Posterior cingulate gyrus (tissue), 11 donors: ENCODE measurements at regions of chr6 and their contacts with region 1.

Region 1: DNA sequence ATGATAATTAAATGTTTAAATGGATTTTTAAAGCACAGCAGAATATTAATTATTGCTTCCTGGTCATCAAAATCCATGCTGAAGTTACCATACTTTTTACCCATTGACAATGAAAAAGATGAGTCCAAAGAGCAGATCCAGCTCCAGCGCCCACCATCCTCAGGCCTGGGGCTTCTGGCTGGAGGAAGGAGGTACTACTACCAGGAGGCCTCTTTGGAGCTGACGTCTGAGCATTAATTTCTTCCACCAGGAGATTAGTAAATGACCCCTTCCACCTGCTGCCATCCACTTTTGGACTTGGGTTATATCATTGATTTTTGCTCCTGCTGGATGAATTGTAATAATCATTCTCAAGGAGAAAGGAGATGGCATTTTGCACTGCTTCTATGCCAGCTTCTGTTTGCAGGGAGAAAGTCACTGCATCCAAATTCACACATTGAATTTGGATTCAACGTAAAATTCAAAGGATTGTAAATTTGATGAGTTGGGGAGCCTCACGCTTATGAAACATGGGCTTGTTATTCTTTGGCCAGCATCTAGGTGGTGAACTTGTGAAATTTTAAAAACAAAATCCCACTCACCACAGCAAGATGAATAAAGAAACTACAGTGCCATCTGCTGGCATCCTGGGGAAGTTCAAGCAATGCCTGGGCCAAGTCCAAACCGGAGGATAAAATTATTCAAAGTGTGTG is 121.8 kb downstream of the SASH1 start:
- DNase-seq: peak in 8 of 10 donors; percentile 43 to 88 (median 77)

Region 2: GRCh38 chr6:148177589-148178233 is 286.8 kb before region 1 on chr6:
- intact Hi-C with region 1: loop called (anchors 1 kb)
- DNase-seq: peak in 9 of 10 donors; percentile 21 to 93 (median 72)

Region 3: DNA sequence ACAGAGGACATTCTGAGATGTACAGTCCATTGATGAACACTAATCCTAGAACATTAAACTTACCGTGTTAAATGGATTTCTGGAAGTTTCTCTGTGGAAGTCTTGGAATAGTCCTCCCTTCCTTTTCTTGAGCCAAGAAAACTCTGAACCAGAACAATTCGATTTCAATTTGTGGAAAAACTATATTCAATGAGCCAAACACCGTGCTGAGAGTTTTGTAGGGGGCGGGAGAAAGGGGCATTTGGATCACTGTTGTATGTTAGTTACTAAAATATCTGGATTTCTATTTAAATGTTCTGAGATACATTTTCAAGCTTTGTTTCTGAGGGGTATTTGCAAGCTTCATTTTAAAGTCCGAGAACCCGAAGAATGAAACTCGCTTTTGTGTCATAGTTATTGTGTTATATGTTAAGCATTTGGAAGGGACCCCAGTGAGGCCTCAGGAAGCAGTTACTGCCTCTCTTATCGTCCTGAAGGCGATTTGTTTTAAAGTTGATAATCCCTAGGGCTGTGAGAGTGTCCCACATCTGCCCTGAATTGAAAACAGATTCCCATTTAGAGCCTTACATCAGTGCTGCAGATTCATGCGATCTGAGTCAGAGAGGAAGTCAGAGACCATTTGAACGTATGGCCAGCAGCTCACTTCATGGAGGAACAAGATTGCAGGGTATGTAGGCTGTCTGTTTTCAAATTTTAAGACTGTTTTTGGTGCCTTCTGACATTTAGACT is 192.6 kb before region 1 on chr6:
- intact Hi-C with region 1: loop called (anchors 5 kb)
- DNase-seq: no peak

Region 4: GRCh38 chr6:148342357-148343046 is 122.0 kb before region 1 on chr6 and contains the start of gene SASH1:
- intact Hi-C with region 1: loop called (anchors 2 kb)
- DNase-seq: peak; percentile 45 to 94 (median 64)

Region 5: DNA sequence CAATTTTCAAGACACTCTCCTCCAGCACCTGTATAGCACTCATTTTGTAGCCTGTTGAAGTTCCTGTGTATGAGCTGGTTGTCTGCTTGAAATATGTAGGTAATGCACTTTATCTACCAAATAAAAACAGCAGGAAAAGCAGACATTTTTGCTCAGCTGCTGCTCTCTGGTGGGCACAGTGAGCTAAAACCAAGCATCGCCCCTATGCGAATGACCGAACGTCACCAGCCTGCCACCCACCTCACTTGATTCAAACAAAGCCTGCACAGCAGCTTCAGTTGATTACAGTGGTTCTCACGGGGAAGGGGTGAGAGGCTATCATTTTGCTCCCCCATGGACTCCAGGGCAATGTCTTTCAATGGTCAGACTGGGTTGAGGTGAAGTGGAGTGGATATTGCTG is 63.8 kb after region 1 on chr6:
- intact Hi-C with region 1: loop called (anchors 2 kb)
- DNase-seq: peak in 5 of 10 donors; percentile 49 to 94 (median 69)